MCF 10A (cell line): ENCODE measurements at regions of chr2 and their contacts with region 1.

Region 1: DNA sequence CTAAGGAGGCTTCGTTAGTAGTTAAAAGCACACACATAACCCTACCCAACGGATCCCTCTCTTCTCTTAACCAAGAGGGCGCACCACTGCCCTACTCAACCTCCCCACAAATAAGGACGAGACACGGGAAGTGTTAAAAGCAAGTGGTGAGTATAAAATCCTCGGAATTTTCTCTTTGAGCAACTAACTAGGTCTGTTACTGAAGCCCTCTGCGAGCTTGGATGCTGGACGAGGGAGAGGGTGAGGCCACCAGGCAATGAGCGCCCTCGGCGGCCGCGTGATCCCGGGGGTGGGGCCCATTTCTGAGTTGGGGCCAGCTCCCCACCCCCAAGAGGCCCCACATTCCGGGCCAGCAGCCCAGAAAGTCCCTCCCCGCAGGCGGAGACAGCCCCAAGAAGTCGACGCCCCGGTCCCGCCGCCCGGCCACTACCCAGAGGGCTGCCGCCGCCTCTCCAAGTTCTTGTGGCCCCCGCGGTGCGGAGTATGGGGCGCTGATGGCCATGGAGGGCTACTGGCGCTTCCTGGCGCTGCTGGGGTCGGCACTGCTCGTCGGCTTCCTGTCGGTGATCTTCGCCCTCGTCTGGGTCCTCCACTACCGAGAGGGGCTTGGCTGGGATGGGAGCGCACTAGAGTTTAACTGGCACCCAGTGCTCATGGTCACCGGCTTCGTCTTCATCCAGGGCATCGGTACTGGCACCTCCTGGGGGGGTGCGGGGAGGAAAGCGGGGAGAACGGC is at the start of gene CYBRD1:
- DNase-seq: peak; percentile 74
- H3K4me3 Mint-ChIP-seq: peak within 1 kb of the TSS; percentile 85
- H3K27ac Mint-ChIP-seq: peak within 1 kb of the TSS; percentile 55
- H3K4me1 Mint-ChIP-seq: peaks cover 15% of the 10 kb centered on the region
- H3K27me3 Mint-ChIP-seq: no peaks in the 10 kb centered on the region
- CTCF ChIP-seq: no peak
- total RNA-seq, gene CYBRD1: 8.9 and 15.8 TPM in 2 replicates

Region 2: GRCh38 chr2:171433763-171434670 is 88.2 kb before region 1 on chr2 and contains the starts of genes DCAF17 and METTL8:
- CTCF ChIA-PET with region 1: interaction called, 4 read pairs
- POLR2A ChIA-PET with region 1: interaction called, 108 read pairs
- intact Hi-C with region 1: no loop called
- DNase-seq: peak; percentile 97
- H3K4me3 Mint-ChIP-seq: peak within 1 kb of the TSS; percentile 98
- H3K27ac Mint-ChIP-seq: peak within 1 kb of the TSS; percentile 93
- H3K4me1 Mint-ChIP-seq: peaks cover 17% of the 10 kb centered on the region
- H3K27me3 Mint-ChIP-seq: no peaks in the 10 kb centered on the region
- CTCF ChIP-seq: peak; percentile 10
- total RNA-seq, gene DCAF17: 20.8 and 21.3 TPM in 2 replicates
- total RNA-seq, gene METTL8: 28.4 and 55.1 TPM in 2 replicates

Region 3: GRCh38 chr2:171491292-171491691 is 30.9 kb before region 1 on chr2:
- CTCF ChIA-PET with region 1: no interaction called
- POLR2A ChIA-PET with region 1: interaction called, 23 read pairs
- intact Hi-C with region 1: no loop called
- DNase-seq: no peak
- H3K4me3 Mint-ChIP-seq: no peak overlapping the region
- H3K27ac Mint-ChIP-seq: no peak overlapping the region
- H3K4me1 Mint-ChIP-seq: peaks cover 6% of the 10 kb centered on the region
- H3K27me3 Mint-ChIP-seq: no peaks in the 10 kb centered on the region
- CTCF ChIP-seq: no peak

Region 4: GRCh38 chr2:171509945-171510731 is 12.1 kb before region 1 on chr2:
- CTCF ChIA-PET with region 1: no interaction called
- POLR2A ChIA-PET with region 1: interaction called, 27 read pairs
- intact Hi-C with region 1: no loop called
- DNase-seq: no peak
- H3K4me3 Mint-ChIP-seq: no peak overlapping the region
- H3K27ac Mint-ChIP-seq: no peak overlapping the region
- H3K4me1 Mint-ChIP-seq: peaks cover 6% of the 10 kb centered on the region
- H3K27me3 Mint-ChIP-seq: no peaks in the 10 kb centered on the region
- CTCF ChIP-seq: no peak

Region 5: GRCh38 chr2:171550613-171551012 is 28.4 kb after region 1 on chr2:
- CTCF ChIA-PET with region 1: interaction called, 3 read pairs
- POLR2A ChIA-PET with region 1: interaction called, 20 read pairs
- intact Hi-C with region 1: no loop called
- DNase-seq: no peak
- H3K4me3 Mint-ChIP-seq: no peak overlapping the region
- H3K27ac Mint-ChIP-seq: no peak overlapping the region
- H3K4me1 Mint-ChIP-seq: no peaks in the 10 kb centered on the region
- H3K27me3 Mint-ChIP-seq: no peaks in the 10 kb centered on the region
- CTCF ChIP-seq: no peak

Region 6: DNA sequence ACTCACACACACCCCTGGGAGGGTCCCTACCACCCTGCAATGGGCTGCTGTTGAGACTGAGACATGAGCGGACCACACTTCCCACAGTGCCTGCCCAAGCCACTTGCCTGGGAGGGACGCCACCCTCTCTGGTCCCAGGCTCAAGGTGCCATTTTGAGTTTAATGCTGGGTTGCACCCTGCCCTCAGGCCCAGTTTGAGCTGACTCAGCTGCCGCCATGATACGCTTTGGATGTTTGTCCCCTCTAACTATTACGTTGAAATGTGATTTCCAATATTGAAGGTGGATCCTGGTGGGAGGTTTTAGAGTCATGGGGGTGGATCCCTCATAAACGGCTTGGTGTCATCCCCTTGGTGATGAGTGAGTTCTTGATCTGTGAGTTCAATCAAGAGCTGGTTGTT is 88.6 kb after region 1 on chr2:
- CTCF ChIA-PET with region 1: no interaction called
- POLR2A ChIA-PET with region 1: no interaction called
- intact Hi-C with region 1: no loop called
- DNase-seq: no peak
- H3K4me3 Mint-ChIP-seq: no peak overlapping the region
- H3K27ac Mint-ChIP-seq: no peak overlapping the region
- H3K4me1 Mint-ChIP-seq: no peaks in the 10 kb centered on the region
- H3K27me3 Mint-ChIP-seq: no peaks in the 10 kb centered on the region
- CTCF ChIP-seq: no peak